ENCODE measurements at regions of chr4 and their contacts with region 1.

Region 1: DNA sequence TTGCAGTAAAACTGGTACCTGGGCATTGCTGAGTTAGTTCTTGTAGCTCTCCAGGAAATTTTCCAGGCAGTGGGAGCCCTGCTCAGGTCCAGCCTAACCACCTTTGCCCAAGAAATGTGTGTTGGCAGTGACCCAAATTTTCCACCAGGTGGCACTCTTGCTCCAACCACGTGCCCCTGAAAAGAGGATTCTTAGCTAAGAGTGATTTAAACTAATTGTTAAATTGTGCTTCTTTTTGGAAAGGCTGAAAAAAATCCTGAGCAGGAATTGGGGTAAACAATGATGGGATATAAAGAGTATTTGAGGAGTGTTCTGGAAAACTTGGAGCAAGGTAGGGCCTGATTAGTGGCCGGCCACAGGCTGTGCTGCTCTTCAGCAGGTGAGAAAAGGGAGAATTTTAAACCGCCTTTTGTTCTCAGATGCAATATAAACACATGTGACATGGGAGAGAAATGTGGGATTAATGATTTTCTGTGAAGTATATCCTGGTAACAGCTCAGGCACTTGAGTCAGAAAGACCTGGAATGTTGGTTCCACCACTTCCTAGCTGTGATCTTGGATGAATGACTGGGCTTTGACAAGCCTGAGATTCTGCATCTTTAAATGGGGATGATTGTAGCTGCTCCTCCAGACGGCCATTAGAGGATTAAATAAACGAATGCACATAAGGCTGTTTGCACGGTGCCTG is 219.6 kb downstream of the PTTG2 start:
- DNase-seq: peak; percentile 41 to 86
- H3K4me3 ChIP-seq: no peak overlapping the region
- H3K27ac ChIP-seq: no peak overlapping the region
- H3K4me1 ChIP-seq: no peaks in the 10 kb centered on the region
- H3K27me3 ChIP-seq: no peaks in the 10 kb centered on the region
- CTCF ChIP-seq: peak; percentile 74 to 86 (median 84)
- EP300 ChIP-seq: no peak
- POLR2A ChIP-seq: no peak
- RAD21 ChIP-seq: peak; percentile 96 to 97

Region 2: DNA sequence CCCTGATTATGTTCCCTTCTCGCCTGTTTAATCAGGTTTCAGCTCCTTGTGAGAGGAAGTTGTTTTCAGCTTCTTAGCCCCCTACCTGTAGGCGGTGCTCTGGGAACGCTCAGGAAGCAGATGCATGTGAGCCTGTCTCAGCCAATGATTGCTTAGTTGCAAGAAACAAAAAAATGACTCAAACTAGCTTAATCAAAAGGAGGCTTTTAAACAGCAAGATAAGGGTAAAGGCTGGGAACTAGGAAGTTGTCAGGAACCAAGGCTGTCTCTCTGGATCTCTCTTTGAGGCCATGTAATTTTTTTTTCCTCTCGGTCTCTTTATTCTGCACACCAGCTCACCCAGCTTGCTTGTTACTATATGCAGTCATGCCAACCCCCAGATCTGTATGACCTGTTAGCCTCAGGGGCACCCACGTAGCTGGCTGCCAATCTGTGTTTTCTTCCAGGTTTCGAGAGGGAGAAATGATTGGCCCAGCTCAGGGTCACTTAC is 110.5 kb before region 1 on chr4:
- CTCF ChIA-PET with region 1: interaction called, 35 read pairs
- POLR2A ChIA-PET with region 1: no interaction called
- DNase-seq: no peak
- H3K4me3 ChIP-seq: no peak overlapping the region
- H3K27ac ChIP-seq: no peak overlapping the region
- H3K4me1 ChIP-seq: peaks cover 0 to 2% (median 0%) of the 10 kb centered on the region in 4 experiments; a peak in 1 of 7 replicates
- H3K27me3 ChIP-seq: no peaks in the 10 kb centered on the region
- CTCF ChIP-seq: peak; percentile 64 to 89 (median 74)
- EP300 ChIP-seq: no peak
- POLR2A ChIP-seq: no peak
- RAD21 ChIP-seq: peak; percentile 89 to 92

Region 3: DNA sequence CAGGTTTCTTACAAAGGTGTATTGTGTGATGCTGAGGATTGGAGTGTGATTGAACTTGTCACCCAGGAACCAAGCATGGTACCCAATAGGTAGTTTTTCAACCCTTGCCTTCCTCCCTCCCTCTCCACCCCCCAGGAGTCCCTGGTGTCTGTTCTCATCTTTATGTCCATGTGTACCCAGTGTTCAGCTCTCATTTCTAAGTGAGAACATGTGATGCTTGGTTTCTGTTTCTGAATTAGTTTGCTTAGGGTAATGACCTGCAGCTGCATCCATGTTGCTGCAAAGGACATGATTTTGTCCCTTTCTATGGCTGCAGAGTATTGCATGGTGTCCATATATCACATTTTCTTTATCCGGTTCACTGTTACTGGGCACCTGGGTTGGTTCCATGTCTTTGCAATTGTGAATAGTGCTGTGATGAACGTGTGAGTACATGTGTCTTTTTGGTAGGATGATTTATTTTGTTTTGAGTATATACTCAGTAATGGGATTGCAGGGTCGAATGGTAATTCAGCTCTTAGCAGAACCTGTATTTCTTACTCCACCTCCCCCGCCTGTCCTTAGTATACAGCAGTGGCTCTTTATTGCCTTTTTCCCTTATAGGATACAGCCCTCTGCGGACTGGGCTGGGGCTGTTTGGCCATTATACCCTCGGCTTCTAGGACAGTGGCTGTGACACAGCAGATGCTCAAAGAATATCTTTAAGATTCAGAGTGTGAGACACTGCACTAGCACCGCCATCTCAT is 74.2 kb before region 1 on chr4:
- CTCF ChIA-PET with region 1: no interaction called
- POLR2A ChIA-PET with region 1: no interaction called
- DNase-seq: no peak
- H3K4me3 ChIP-seq: no peak overlapping the region
- H3K27ac ChIP-seq: no peak overlapping the region
- H3K4me1 ChIP-seq: peaks cover 0 to 8% (median 0%) of the 10 kb centered on the region in 4 experiments; a peak in 2 of 7 replicates
- H3K27me3 ChIP-seq: no peaks in the 10 kb centered on the region
- CTCF ChIP-seq: no peak
- EP300 ChIP-seq: no peak
- POLR2A ChIP-seq: no peak
- RAD21 ChIP-seq: no peak

Region 4: DNA sequence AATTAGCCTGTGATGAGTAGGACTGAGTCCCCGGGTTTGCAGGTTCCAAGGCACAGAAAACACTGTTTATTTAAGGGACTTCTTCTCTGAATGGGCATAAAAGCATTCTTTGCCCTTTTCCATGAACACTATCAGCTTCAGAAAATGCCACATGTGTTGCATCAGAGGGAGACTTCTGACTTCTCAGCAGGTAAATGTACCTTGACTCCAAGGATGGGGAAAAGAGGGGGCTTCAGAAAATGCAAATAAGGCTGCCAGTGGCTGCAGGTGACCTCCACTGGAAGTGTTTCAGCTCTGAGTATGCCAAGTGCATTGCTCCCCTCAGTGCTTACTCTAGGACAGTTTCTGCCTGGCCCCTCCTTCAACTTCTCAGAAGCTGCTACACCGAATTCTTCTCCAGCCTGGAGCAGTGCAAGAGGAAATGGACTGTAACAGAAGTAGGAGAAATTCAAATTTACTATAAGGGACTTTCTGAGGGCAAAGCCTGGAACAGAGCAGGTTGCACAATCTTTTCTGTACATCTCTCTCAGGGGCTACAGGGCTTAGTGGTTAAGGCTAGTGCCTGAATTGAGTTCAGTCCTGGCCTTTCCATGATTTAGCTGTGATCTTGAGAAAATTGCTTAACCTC is 13.5 kb after region 1 on chr4:
- CTCF ChIA-PET with region 1: interaction called, 18 read pairs
- POLR2A ChIA-PET with region 1: no interaction called
- DNase-seq: no peak
- H3K4me3 ChIP-seq: no peak overlapping the region
- H3K27ac ChIP-seq: no peak overlapping the region
- H3K4me1 ChIP-seq: no peaks in the 10 kb centered on the region; a peak in 1 of 7 replicates
- H3K27me3 ChIP-seq: no peaks in the 10 kb centered on the region
- CTCF ChIP-seq: no peak
- EP300 ChIP-seq: no peak
- POLR2A ChIP-seq: no peak
- RAD21 ChIP-seq: no peak

Region 5: DNA sequence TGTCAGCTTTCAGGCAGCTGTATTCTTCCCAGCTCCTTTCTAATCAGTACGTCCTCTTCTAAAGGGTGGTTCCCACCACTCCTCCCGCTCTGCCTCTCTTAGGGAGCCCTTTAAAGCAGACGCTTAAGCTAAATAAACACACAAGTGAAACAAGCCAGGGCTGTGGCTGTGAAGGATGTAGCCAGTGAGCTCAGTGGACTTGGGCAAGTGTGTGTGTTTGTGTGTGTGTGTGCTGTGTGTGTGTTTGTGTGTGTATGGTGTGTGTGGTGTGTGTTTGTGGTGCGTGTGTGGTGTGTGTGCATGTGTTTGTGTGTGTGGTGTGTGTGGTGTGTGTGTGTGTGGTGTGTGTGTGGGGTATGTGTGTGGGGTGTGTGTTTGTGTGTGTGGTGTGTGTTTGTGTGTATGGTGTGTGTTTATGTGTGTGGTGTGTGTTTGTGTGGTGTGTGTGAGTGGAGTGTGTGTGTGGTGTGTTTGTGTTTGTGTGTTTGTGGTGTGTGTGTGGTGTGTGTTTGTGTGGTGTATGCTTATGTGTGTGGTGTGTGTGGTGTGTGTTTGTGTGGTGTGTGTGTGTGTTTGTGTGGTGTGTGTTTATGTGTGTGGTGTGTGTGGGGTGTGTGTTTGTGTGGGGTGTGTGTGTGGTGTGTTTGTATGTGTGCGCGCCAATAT is 63.7 kb after region 1 on chr4:
- CTCF ChIA-PET with region 1: interaction called, 10 read pairs
- POLR2A ChIA-PET with region 1: no interaction called
- DNase-seq: peak in 1 of 2 experiments; percentile 6
- H3K4me3 ChIP-seq: no peak overlapping the region
- H3K27ac ChIP-seq: no peak overlapping the region
- H3K4me1 ChIP-seq: peaks cover 0 to 3% (median 0%) of the 10 kb centered on the region in 4 experiments; a peak in 1 of 7 replicates
- H3K27me3 ChIP-seq: no peaks in the 10 kb centered on the region
- CTCF ChIP-seq: no peak
- EP300 ChIP-seq: no peak
- POLR2A ChIP-seq: no peak
- RAD21 ChIP-seq: no peak

Region 6: GRCh38 chr4:38703635-38704034 is 523.8 kb after region 1 on chr4:
- CTCF ChIA-PET with region 1: interaction called, 10 read pairs
- POLR2A ChIA-PET with region 1: no interaction called
- DNase-seq: no peak
- H3K4me3 ChIP-seq: no peak overlapping the region
- H3K27ac ChIP-seq: no peak overlapping the region
- H3K4me1 ChIP-seq: peaks cover 0 to 6% (median 0%) of the 10 kb centered on the region in 4 experiments; a peak in 1 of 7 replicates
- H3K27me3 ChIP-seq: no peaks in the 10 kb centered on the region
- CTCF ChIP-seq: no peak
- EP300 ChIP-seq: no peak
- POLR2A ChIP-seq: no peak
- RAD21 ChIP-seq: no peak

Region 7: DNA sequence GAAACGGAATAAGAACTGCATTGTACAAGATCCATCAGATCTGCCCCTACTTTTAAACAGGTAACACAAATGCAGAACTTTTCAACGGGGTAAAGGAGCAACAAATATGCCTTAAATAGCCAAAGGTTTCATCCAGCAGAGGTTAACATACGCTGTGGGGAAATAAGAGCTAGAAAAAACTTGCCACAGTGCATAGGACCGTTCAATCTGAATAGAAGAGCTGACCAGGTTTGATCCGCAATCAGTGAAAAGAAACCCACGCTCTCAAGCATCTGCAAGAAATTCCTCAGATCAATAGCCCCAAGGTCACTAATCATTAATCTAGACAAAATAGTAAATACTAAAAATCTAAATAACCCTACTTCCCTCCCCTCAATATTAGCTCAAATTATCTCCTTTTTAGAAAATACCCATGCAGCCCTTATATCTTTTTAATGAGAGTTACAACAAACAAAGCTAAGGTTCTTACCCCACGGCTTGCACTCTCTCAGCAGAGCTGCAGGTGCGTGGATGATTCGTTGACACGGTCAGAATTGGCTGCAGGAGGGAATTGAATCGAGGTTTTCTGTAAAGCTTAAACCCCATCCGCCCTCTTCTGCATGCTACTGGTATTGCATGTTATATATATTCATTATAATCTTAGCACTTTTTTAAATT is 602.7 kb after region 1 on chr4 and contains the start of gene TLR10:
- CTCF ChIA-PET with region 1: interaction called, 16 read pairs
- POLR2A ChIA-PET with region 1: no interaction called
- DNase-seq: no peak
- H3K4me3 ChIP-seq: no peak within 1 kb of the TSS
- H3K27ac ChIP-seq: no peak within 1 kb of the TSS
- H3K4me1 ChIP-seq: no peaks in the 10 kb centered on the region
- H3K27me3 ChIP-seq: no peaks in the 10 kb centered on the region
- CTCF ChIP-seq: peak; percentile 3 to 56 (median 49); a peak in 3 of 4 replicates
- EP300 ChIP-seq: no peak
- POLR2A ChIP-seq: no peak
- RAD21 ChIP-seq: peak; percentile 54 to 59
- total RNA-seq, gene TLR10: not detected in 2 replicates